ENCODE measurements at regions of chr7 and their contacts with region 1.

Region 1: GRCh38 chr7:72493850-72494661 is 81.9 kb upstream of the CALN1 start:
- H3K4me3 Mint-ChIP-seq: no peak overlapping the region
- H3K27ac Mint-ChIP-seq: no peak overlapping the region
- H3K4me1 Mint-ChIP-seq: no peaks in the 10 kb centered on the region
- H3K27me3 Mint-ChIP-seq: no peaks in the 10 kb centered on the region

Region 2: DNA sequence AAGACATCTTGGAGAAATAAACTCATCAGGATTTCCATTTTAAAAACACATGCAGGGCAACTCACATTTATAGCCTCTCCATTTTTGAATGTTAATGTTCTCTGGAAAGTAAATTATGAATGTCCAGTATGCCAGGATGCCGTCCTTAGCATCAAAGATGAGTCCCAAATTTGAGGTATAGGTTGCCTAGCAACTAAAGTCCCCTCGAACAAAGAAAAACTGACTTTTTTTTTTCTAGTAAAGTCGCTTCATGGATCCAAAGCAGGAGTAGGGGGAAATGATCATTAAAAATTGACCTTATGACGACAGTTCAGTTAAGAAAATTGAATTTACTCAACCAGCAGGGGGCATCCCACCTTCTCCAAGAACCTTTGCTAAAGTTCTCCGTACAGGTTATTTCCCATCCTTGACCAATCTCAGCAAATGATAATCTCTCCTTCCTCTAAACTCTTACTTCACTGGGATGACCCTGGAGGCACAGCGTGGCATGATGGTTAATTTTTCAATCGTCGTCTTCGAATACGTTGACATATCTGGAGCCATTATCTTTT is 310.3 kb before region 1 on chr7:
- intact Hi-C with region 1: loop called (anchors 10 kb)
- H3K4me3 Mint-ChIP-seq: no peak overlapping the region
- H3K27ac Mint-ChIP-seq: no peak overlapping the region
- H3K4me1 Mint-ChIP-seq: no peaks in the 10 kb centered on the region
- H3K27me3 Mint-ChIP-seq: no peaks in the 10 kb centered on the region

Region 3: DNA sequence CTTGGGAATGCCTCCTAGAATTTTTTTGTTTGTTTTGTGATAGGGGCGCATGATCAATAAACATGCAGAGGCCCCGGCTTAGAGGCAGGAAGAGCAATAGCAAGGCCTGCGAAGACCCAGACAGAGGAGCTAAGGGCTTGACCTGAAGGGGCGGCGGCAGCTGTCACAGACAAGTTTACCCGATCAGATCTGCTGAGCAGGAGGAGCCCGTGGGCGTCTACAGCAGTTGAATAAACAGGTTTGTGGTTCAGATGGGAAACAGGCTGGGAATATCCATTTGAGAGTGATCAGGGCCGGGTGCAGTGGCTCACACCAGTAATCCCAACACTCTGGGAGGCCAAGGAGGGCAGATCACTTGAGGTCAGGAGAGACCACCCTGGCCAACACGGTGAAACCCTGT is 44.1 kb after region 1 on chr7:
- intact Hi-C with region 1: no loop called
- H3K4me3 Mint-ChIP-seq: no peak overlapping the region
- H3K27ac Mint-ChIP-seq: no peak overlapping the region
- H3K4me1 Mint-ChIP-seq: no peaks in the 10 kb centered on the region
- H3K27me3 Mint-ChIP-seq: no peaks in the 10 kb centered on the region

Measured in dendritic cell treated with granulocyte-macrophage colony-stimulating factor and Interleukin-4, amounts not matched to agents 40 ng/mL and 50 ng/mL, for 4 days (primary cell).